PC-3 (cell line): ENCODE measurements at regions of chr17 and their contacts with region 1.

Region 1: GRCh38 chr17:81309070-81309905 is 14.2 kb upstream of the SLC38A10 start:
- DNase-seq: peak; percentile 85
- ATAC-seq: peak; percentile 90
- H3K4me3 ChIP-seq: peak overlapping the region; percentile 65
- H3K27ac ChIP-seq: peak overlapping the region; percentile 49
- H3K4me1 ChIP-seq: peaks cover 11% of the 10 kb centered on the region
- H3K27me3 ChIP-seq: no peaks in the 10 kb centered on the region
- CTCF ChIP-seq: peak; percentile 66

Region 2: GRCh38 chr17:81277421-81277820 is 31.9 kb before region 1 on chr17:
- CTCF ChIA-PET with region 1: no interaction called
- POLR2A ChIA-PET with region 1: no interaction called
- intact Hi-C with region 1: no loop called
- DNase-seq: no peak
- ATAC-seq: no peak
- H3K4me3 ChIP-seq: no peak overlapping the region
- H3K27ac ChIP-seq: no peak overlapping the region
- H3K4me1 ChIP-seq: no peaks in the 10 kb centered on the region
- H3K27me3 ChIP-seq: no peaks in the 10 kb centered on the region
- CTCF ChIP-seq: no peak

Region 3: GRCh38 chr17:81328978-81329919 is 20.0 kb after region 1 on chr17:
- CTCF ChIA-PET with region 1: interaction called, 5 read pairs
- POLR2A ChIA-PET with region 1: interaction called, 3 read pairs
- intact Hi-C with region 1: loop called (anchors 1 kb)
- DNase-seq: peak; percentile 99
- ATAC-seq: peak; percentile 89
- H3K4me3 ChIP-seq: peak overlapping the region; percentile 47
- H3K27ac ChIP-seq: peak overlapping the region; percentile 94
- H3K4me1 ChIP-seq: peaks cover 32% of the 10 kb centered on the region
- H3K27me3 ChIP-seq: no peaks in the 10 kb centered on the region
- CTCF ChIP-seq: no peak

Region 4: GRCh38 chr17:81340607-81341515 is 31.6 kb after region 1 on chr17:
- CTCF ChIA-PET with region 1: interaction called, 6 read pairs
- POLR2A ChIA-PET with region 1: interaction called, 3 read pairs
- intact Hi-C with region 1: loop called (anchors 2 kb)
- DNase-seq: peak; percentile 29
- ATAC-seq: no peak
- H3K4me3 ChIP-seq: peak overlapping the region; percentile 79
- H3K27ac ChIP-seq: peak overlapping the region; percentile 86
- H3K4me1 ChIP-seq: peaks cover 39% of the 10 kb centered on the region
- H3K27me3 ChIP-seq: no peaks in the 10 kb centered on the region
- CTCF ChIP-seq: no peak

Region 5: DNA sequence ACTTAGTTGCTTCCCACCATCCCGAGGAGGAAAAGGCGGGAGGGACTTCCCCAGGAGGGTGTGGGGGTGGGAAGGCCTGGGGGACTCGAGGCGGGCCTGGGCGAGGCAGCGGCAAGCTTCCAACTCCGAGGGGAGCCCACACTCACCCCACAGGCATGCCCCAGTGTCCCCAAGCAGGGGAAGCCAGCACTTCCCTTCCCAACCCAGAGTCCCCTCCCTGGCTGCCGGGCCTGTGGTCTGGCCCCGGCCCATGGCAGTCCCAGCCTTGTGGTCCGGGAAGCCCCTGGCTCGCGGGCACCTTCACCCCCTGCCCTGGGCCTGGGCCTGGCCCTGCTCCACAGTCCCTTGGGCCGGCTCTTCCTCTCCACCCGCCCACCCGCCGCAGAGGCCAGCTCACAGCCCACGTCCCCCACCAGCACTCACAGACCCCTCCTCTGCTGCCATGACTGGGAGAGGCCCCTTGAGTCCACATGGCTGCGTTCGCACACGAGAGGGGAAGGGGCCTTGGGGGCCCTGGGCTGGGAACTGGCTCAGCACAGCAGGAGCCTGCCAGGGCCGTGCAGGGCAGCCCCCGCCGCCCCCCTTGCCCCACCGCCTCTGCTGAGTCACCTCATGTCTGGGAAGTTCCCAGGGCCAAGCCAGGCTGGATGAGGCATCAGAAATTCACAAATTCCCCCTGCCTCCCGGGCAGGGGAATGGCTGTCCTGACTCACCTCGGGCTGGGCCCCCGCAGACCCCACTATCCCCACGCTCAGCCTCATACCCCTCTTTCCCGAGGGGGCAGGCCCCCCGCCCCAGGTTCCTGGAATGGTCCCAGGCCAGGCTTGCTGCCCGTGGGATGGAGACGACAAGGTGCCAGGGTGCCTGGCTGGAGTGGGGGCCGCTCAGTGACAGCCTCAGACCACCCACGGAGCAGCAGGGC is 113.7 kb after region 1 on chr17:
- CTCF ChIA-PET with region 1: no interaction called
- POLR2A ChIA-PET with region 1: interaction called, 12 read pairs
- intact Hi-C with region 1: no loop called
- DNase-seq: peak; percentile 93
- ATAC-seq: peak; percentile 71
- H3K4me3 ChIP-seq: peak overlapping the region; percentile 49; the same call in 1 of the 2 replicates
- H3K27ac ChIP-seq: peak overlapping the region; percentile 96
- H3K4me1 ChIP-seq: peaks cover 42% of the 10 kb centered on the region
- H3K27me3 ChIP-seq: no peaks in the 10 kb centered on the region
- CTCF ChIP-seq: no peak

Region 6: GRCh38 chr17:81484195-81484979 is 175.1 kb after region 1 on chr17:
- CTCF ChIA-PET with region 1: interaction called, 3 read pairs
- POLR2A ChIA-PET with region 1: no interaction called
- intact Hi-C with region 1: loop called (anchors 1 kb)
- DNase-seq: peak; percentile 89
- ATAC-seq: peak; percentile 75
- H3K4me3 ChIP-seq: peak overlapping the region; percentile 62
- H3K27ac ChIP-seq: no peak overlapping the region
- H3K4me1 ChIP-seq: peaks cover 15% of the 10 kb centered on the region
- H3K27me3 ChIP-seq: no peaks in the 10 kb centered on the region
- CTCF ChIP-seq: peak; percentile 92